GM12878 (cell line): ENCODE measurements at regions of chr6 and their contacts with region 1.

Region 1: DNA sequence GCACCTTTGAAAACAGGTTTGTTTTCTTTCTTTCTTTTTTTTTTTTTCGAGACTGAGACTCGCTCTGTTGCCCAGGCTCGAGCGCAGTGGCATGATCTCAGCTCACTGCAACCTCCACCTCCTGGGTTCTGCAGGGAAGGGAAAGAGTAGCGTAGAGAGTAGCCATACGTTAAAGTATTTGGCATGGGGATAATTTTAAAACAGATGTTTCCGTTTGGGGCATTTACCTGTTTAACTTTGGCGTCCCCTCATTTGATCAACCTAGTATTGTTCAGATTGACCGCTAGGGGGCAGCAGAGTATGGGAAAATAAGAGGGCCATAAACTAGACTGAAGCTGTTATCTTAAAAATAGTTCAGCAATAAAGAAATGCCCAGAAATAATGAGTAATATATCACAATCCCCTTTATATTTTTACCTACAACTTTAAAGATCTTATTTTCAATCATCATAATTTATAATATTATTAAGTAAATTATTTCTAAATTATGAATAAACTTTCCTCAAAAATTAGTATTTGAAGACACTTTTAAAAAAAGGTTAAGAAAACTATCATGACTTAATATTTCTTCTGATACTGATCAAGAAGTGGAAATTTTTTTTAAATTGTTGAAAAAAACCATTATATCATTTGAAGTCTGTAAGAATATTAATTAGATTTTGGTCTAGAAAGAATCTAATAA is 7.6 kb upstream of the TAAR9 start:
- DNase-seq: peak; percentile 21
- ATAC-seq: peak; percentile 96
- H3K4me3 ChIP-seq: no peak overlapping the region
- H3K27ac ChIP-seq: no peak overlapping the region
- H3K4me1 ChIP-seq: no peaks in the 10 kb centered on the region
- H3K27me3 ChIP-seq: no peaks in the 10 kb centered on the region; a peak in 1 of 4 replicates
- CTCF ChIP-seq: peak; percentile 57 to 74 (median 60); a peak in 5 of 6 replicates
- EP300 ChIP-seq: no peak
- POLR2A ChIP-seq: no peak
- RAD21 ChIP-seq: peak; percentile 91

Region 2: DNA sequence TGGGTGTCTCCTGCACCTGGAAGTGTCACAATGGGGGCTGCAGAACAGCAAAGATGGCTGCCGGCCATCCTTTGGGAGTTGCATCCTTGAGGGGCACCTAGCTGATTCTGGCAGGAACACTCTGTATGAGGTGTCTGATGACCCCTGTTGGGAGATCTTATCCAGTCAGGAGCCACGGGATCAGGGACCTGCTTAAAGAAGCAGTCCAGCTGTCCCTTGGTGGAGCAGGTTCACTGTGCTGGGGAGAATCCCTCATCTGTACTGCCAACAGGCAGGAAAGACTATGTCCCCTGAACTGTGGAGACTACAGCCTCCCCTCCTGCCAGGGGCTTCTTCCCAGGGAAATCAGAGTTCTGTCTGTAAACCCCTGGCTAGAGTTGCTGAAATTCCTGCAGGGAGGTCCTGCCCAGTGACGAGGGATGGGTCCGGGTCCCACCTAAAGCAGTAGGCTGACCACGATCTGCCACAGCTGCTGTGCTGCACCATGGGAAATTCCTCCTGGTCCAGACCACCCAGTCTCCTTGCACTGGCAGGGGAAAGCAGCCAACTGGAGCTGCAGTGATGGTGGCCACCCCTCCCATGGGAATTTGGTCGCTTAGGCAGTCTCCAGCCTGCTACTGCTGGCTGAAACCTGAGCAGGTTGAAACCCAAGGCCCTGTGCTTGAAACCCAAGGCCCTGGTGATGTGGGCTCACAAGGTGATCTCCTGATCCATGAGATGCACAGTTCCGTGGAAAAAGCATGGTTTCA is 105.4 kb before region 1 on chr6:
- CTCF ChIA-PET with region 1: no interaction called
- POLR2A ChIA-PET with region 1: no interaction called
- RAD21 ChIA-PET with region 1: no interaction called
- SMC1A ChIA-PET with region 1: no interaction called
- in situ Hi-C with region 1: no loop called
- intact Hi-C with region 1: no loop called
- DNase-seq: no peak
- ATAC-seq: no peak
- H3K4me3 ChIP-seq: no peak overlapping the region
- H3K27ac ChIP-seq: no peak overlapping the region
- H3K4me1 ChIP-seq: no peaks in the 10 kb centered on the region
- H3K27me3 ChIP-seq: no peaks in the 10 kb centered on the region
- CTCF ChIP-seq: no peak
- EP300 ChIP-seq: no peak
- POLR2A ChIP-seq: no peak
- RAD21 ChIP-seq: no peak

Region 3: GRCh38 chr6:132498638-132499037 is 31.8 kb before region 1 on chr6:
- CTCF ChIA-PET with region 1: interaction called, 3 read pairs
- POLR2A ChIA-PET with region 1: interaction called, 3 read pairs
- RAD21 ChIA-PET with region 1: no interaction called
- SMC1A ChIA-PET with region 1: interaction called, 11 read pairs
- in situ Hi-C with region 1: no loop called
- intact Hi-C with region 1: no loop called
- DNase-seq: peak; percentile 60
- ATAC-seq: peak; percentile 75
- H3K4me3 ChIP-seq: peak overlapping the region; percentile 22; the same call in 1 of the 2 replicates
- H3K27ac ChIP-seq: peak overlapping the region; percentile 76
- H3K4me1 ChIP-seq: peaks cover 53% of the 10 kb centered on the region
- H3K27me3 ChIP-seq: no peaks in the 10 kb centered on the region
- CTCF ChIP-seq: no peak
- EP300 ChIP-seq: peak; percentile 87 to 97
- POLR2A ChIP-seq: no peak
- RAD21 ChIP-seq: no peak

Region 4: DNA sequence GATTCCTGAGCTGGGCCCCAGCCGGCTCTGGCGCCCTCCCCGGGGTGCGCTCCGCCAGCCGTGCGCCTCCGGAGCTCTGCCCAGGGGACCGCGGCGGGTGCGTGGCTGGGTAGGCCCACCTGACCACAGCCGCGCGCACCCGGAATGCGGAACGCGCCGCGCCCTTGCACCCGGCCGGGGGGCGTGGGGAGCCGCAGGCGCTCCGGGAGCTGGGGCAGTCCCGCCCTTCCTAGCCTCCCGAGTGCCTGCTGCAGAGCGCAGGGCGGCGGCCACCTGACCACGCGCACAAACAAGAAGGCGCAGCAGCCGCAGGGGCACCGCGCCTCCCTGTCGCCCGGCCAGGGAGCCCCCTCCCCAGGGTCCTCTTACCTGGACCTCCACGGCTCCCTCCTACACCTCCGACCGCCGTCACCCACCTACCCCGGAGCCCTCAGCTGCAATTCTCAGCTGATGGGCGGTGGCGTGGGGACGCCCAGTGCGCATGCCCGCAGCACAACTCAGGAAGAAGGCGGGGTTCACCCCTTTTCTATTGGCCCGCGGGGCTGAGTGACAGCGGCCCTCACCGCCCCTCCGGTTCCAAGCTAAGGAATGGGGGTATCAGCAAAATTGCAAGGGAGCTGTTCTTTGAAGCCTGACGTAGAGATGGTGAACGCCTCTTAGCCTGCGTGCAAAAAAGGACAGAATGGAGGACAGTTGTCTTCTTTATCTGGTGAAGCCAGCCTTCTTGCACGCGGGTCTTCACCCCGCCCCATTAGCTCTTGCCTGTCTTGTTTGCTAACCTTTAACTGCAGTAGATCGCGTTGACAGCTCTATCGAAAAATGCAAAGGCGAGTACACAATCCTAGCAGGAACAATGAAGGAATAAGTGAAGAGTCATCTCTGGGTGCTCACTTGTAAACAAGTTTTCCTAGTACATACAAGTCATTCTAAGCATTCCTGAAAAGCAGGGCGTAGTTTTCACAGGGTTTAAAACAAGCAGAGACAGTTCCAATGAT is 17.5 kb before region 1 on chr6 and contains the start of gene STX7:
- CTCF ChIA-PET with region 1: interaction called, 20 read pairs
- POLR2A ChIA-PET with region 1: interaction called, 4 read pairs
- RAD21 ChIA-PET with region 1: interaction called, 4 read pairs
- SMC1A ChIA-PET with region 1: interaction called, 6 read pairs
- in situ Hi-C with region 1: no loop called
- intact Hi-C with region 1: no loop called
- DNase-seq: peak; percentile 48
- ATAC-seq: peak; percentile 91
- H3K4me3 ChIP-seq: peak within 1 kb of the TSS; percentile 61
- H3K27ac ChIP-seq: peak within 1 kb of the TSS; percentile 63
- H3K4me1 ChIP-seq: peaks cover 6% of the 10 kb centered on the region
- H3K27me3 ChIP-seq: no peaks in the 10 kb centered on the region
- CTCF ChIP-seq: no peak
- EP300 ChIP-seq: no peak
- POLR2A ChIP-seq: peak; percentile 77
- RAD21 ChIP-seq: no peak
- polyA plus RNA-seq, gene STX7: 26.5 to 30.7 TPM

Region 5: DNA sequence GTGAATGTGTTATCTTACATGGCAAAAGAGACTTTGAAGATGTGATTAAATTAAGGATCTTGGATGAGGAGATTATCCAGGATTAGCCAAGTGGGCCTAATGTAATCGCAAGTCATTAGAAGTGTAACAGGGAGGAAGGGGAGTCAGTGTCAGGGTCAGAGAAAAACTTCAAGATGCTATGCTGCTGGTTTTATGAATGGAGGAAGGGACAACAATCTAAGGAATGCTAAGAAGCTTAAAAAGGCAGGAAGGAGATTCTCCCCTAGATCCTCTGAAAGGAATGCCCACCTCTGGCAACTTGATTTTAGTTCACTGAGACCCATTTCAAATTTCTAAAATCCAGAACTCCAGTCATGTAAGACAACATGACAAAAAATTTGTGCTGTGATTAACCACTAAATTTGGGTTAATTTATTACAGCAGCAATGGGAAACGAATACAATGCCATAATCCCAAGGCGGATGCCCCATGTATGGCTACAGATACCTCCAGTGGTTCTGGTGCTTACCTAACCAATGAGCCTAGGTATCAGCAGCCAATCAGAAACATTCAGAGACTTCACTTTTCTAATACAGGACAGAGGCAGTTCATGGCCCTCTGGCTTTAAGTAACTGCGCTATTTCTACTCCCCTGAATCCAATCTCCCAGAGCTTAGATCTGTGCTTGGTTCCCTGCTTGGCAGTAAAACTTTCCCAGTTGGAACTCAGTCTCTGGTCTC is 18.5 kb after region 1 on chr6:
- CTCF ChIA-PET with region 1: interaction called, 14 read pairs
- POLR2A ChIA-PET with region 1: no interaction called
- RAD21 ChIA-PET with region 1: no interaction called
- SMC1A ChIA-PET with region 1: interaction called, 5 read pairs
- in situ Hi-C with region 1: no loop called
- intact Hi-C with region 1: no loop called
- DNase-seq: no peak
- ATAC-seq: no peak
- H3K4me3 ChIP-seq: no peak overlapping the region
- H3K27ac ChIP-seq: no peak overlapping the region
- H3K4me1 ChIP-seq: no peaks in the 10 kb centered on the region
- H3K27me3 ChIP-seq: peaks cover 0 to 2% of the 10 kb centered on the region in 2 experiments; a peak in 3 of 4 replicates
- CTCF ChIP-seq: no peak
- EP300 ChIP-seq: no peak
- POLR2A ChIP-seq: no peak
- RAD21 ChIP-seq: no peak

Region 6: GRCh38 chr6:132648356-132649227 is 118.2 kb after region 1 on chr6:
- CTCF ChIA-PET with region 1: interaction called, 3 read pairs
- POLR2A ChIA-PET with region 1: no interaction called
- RAD21 ChIA-PET with region 1: no interaction called
- SMC1A ChIA-PET with region 1: no interaction called
- in situ Hi-C with region 1: no loop called
- intact Hi-C with region 1: loop called (anchors 5 kb)
- DNase-seq: no peak
- ATAC-seq: peak; percentile 80
- H3K4me3 ChIP-seq: no peak overlapping the region
- H3K27ac ChIP-seq: no peak overlapping the region
- H3K4me1 ChIP-seq: 0 out of 2 replicates have a peak, but pooled peaks cover 5% of the 10 kb centered on the region
- H3K27me3 ChIP-seq: no peaks in the 10 kb centered on the region
- CTCF ChIP-seq: no peak
- EP300 ChIP-seq: no peak
- POLR2A ChIP-seq: no peak
- RAD21 ChIP-seq: no peak

Region 7: DNA sequence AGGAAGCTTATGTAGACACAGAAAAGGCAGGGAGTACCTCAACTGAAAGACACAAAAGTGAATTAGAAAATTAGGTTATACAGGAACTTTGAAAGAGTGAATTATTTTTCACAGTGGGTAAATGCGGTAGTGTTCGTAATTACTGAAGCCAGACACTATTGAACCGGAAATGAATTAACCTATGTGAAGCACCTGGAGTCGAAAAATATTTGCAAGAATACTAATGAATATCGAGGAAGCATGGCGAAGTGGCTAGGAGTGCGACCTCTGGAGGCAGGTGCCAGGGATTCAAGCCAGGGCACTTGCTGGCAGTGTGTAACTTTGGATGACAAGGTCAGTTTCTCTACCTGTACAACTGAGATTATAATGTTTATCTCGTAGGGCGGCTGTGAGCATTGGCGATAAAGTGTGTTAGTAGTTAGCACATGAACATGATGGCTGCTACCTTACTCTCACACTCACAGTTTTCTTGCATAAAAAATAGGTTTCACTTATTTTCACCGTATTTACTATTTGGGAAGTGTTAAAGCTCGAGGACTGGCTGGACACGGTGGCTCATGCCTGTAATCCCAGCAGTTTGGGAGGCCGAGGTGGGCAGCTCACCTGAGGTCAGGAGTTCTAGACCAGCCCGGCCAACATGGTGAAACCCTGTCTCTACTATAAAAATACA is 268.6 kb after region 1 on chr6:
- CTCF ChIA-PET with region 1: interaction called, 8 read pairs
- POLR2A ChIA-PET with region 1: no interaction called
- RAD21 ChIA-PET with region 1: no interaction called
- SMC1A ChIA-PET with region 1: interaction called, 5 read pairs
- in situ Hi-C with region 1: loop called (anchors 10 kb)
- intact Hi-C with region 1: loop called (anchors 10 kb)
- DNase-seq: peak; percentile 63
- ATAC-seq: peak; percentile 94
- H3K4me3 ChIP-seq: peak overlapping the region; percentile 82
- H3K27ac ChIP-seq: peak overlapping the region; percentile 87
- H3K4me1 ChIP-seq: peaks cover 3% of the 10 kb centered on the region; the same call in 1 of the 2 replicates
- H3K27me3 ChIP-seq: no peaks in the 10 kb centered on the region
- CTCF ChIP-seq: peak; percentile 78 to 90 (median 85)
- EP300 ChIP-seq: no peak
- POLR2A ChIP-seq: no peak
- RAD21 ChIP-seq: peak; percentile 55